ENCODE measurements at regions of chr9 and their contacts with region 1.

Region 1: GRCh38 chr9:36798350-36799065 is 225.8 kb downstream of the MELK start:
- DNase-seq: no peak
- H3K4me3 ChIP-seq: no peak overlapping the region
- H3K27ac ChIP-seq: no peak overlapping the region
- H3K4me1 ChIP-seq: no peaks in the 10 kb centered on the region
- H3K27me3 ChIP-seq: peaks cover 0 to 22% of the 10 kb centered on the region in 2 donors
- CTCF ChIP-seq: no peak
- POLR2A ChIP-seq: no peak

Region 2: DNA sequence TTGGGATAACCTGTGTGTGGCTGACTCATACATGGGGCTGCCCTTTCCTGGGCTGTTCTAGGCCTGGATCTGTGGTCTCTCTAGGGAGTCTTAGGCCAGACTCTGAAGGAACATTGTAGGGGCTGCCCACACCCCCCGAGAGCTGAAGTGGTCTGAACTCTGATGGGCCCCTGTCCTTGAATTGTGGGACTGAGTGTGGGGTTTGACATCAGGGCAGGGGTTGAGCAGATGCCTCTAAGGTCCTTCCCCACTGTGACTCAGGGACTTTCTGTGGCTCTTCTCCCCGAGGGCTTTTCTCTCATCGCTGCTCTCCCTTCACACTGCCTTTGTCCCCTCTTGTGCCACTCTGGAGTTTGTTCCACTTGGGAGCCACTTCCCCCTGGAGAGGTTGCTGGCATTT is 10.8 kb before region 1 on chr9:
- intact Hi-C with region 1: no loop called
- DNase-seq: no peak
- H3K4me3 ChIP-seq: no peak overlapping the region
- H3K27ac ChIP-seq: no peak overlapping the region
- H3K4me1 ChIP-seq: no peaks in the 10 kb centered on the region
- H3K27me3 ChIP-seq: peaks cover 0 to 12% of the 10 kb centered on the region in 2 donors
- CTCF ChIP-seq: no peak
- POLR2A ChIP-seq: no peak

Region 3: DNA sequence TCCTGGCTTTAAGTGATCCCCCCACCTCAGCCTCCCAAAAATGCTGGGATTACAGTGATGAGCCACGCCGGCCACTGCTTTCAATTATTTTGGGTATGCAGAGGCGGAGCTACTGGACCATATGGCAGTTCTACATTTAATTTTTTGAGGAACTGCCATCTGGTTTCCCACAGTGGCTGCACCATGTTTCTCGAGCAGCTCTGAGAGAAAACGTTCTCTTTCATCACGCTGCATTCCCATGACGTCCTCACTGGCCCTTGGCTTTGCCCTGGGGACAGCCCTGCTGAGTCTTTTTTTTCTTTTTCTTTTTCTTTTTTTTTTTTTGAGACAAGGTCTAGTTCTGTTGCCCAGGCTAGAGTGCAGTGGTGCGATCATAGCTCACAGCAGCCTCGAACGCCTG is 588.5 kb after region 1 on chr9:
- intact Hi-C with region 1: loop called (anchors 5 kb)
- DNase-seq: no peak
- H3K4me3 ChIP-seq: no peak overlapping the region
- H3K27ac ChIP-seq: no peak overlapping the region
- H3K4me1 ChIP-seq: no peaks in the 10 kb centered on the region
- H3K27me3 ChIP-seq: no peaks in the 10 kb centered on the region
- CTCF ChIP-seq: no peak
- POLR2A ChIP-seq: no peak

Measured in breast epithelium (tissue), 4 donors.